GM18951 (cell line): ENCODE measurements at regions of chr5 and their contacts with region 1.

Region 1: DNA sequence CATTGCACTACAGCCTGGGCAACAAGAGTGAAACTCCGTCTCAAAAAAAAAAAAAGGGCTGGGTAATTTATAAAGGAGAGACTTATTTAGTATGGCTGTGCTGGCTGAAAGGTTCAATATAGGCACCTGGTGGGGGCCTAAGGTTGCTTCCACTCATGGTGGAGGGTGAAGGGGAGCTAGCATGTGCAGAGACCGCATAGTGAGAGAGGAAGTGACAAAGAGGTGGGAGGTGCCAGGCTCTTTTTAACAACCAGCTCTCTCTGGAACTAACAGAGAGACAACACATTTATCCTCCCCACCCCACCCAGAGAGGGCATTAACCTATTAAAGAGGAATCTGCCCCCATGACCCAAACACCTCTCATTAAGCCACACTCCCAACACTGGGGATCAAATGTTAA is 28.9 kb upstream of the SERINC5 start:
- POLR2A ChIP-seq: no peak

Region 2: DNA sequence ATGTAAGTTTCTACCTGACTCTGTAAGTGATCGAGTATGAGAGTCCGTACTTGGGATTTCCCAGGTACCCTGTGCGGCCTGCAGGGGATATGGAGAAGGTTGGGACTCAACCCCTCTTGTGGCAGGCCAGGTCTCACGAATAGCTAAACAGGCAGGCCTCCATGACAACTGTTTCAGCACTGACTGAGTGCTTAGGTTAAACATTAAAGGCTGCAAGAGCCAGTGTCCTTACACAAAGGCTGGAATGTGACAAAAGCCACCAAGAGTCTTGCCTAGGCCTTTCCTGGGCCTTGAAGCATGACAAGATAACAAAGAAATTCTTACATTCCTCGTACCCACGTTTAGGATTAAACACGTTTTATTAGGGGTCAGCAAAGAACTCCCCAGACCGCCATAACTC is 190.9 kb before region 1 on chr5:
- in situ Hi-C with region 1: loop called (anchors 10 kb)
- POLR2A ChIP-seq: no peak

Region 3: GRCh38 chr5:81187885-81188284 is 903.2 kb after region 1 on chr5:
- in situ Hi-C with region 1: no loop called
- POLR2A ChIP-seq: no peak

Region 4: GRCh38 chr5:81751009-81751835 is 1466.5 kb after region 1 on chr5 and contains the start of gene SSBP2:
- in situ Hi-C with region 1: no loop called
- POLR2A ChIP-seq: peak; percentile 62